ENCODE measurements at regions of chr7 and their contacts with region 1.

Region 1: GRCh38 chr7:158353606-158354570 is 233.7 kb downstream of the PTPRN2 start:
- DNase-seq: peak in 1 of 2 experiments; percentile 13
- H3K4me3 ChIP-seq: no peak overlapping the region
- H3K4me3 Mint-ChIP-seq: no peak overlapping the region
- H3K27ac Mint-ChIP-seq: no peak overlapping the region
- H3K4me1 ChIP-seq: no peaks in the 10 kb centered on the region
- H3K4me1 Mint-ChIP-seq: no peaks in the 10 kb centered on the region
- H3K27me3 ChIP-seq: no peaks in the 10 kb centered on the region
- H3K27me3 Mint-ChIP-seq: no peaks in the 10 kb centered on the region
- CTCF ChIP-seq: peak; percentile 24 to 34

Region 2: DNA sequence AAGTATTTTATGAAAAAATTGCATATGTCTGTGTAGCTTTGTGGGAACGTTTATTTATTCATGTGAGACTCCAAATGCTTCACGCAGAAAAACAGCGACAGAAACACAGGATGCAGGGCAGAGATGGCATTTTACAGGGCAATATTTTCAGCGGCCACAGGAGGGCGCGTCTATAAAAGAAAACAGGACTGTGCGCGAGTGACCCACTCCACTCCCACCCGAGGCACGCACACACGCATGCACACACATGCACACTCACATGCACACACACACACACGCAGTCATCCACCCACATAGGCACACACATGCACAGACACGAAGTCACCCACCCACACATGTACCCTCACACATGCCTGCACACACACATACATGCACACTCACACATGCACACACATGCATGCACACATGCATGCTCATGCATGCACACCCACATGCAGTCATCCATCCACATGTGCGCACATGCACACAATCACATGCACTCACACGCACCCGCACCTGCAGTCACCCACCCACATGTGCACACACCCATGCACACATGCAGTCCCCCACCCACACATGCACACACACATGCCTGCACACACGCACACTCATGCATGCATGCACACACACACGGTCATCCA is 920.8 kb before region 1 on chr7:
- CTCF ChIA-PET with region 1: no interaction called
- POLR2A ChIA-PET with region 1: no interaction called
- intact Hi-C with region 1: loop called (anchors 5 kb)
- DNase-seq: peak; percentile 35 to 44
- H3K4me3 ChIP-seq: no peak overlapping the region
- H3K4me3 Mint-ChIP-seq: peak overlapping the region; percentile 50
- H3K27ac Mint-ChIP-seq: no peak overlapping the region
- H3K4me1 ChIP-seq: no peaks in the 10 kb centered on the region
- H3K4me1 Mint-ChIP-seq: peaks cover 14% of the 10 kb centered on the region
- H3K27me3 ChIP-seq: no peaks in the 10 kb centered on the region
- H3K27me3 Mint-ChIP-seq: no peaks in the 10 kb centered on the region
- CTCF ChIP-seq: peak; percentile 53 to 72

Region 3: DNA sequence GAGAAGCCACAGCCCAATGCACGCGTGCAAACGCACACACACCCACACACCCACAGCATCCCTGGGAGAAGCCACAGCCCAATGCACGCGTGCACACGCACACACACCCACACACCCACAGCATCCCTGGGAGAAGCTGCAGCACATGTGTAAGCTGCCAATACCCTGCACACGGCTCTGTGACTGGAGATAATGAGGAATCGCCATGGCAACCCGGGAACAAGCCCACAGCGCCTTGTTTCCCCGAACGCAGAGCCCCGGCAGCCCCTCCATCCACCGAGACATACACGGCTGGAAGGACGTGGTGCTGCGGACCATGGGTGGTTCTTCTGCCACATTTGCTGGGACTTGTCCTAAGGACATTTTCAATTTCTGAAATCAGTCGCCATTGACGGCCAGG is 12.5 kb after region 1 on chr7:
- CTCF ChIA-PET with region 1: no interaction called
- POLR2A ChIA-PET with region 1: no interaction called
- intact Hi-C with region 1: no loop called
- DNase-seq: no peak
- H3K4me3 ChIP-seq: no peak overlapping the region
- H3K4me3 Mint-ChIP-seq: no peak overlapping the region
- H3K27ac Mint-ChIP-seq: no peak overlapping the region
- H3K4me1 ChIP-seq: no peaks in the 10 kb centered on the region
- H3K4me1 Mint-ChIP-seq: no peaks in the 10 kb centered on the region
- H3K27me3 ChIP-seq: no peaks in the 10 kb centered on the region
- H3K27me3 Mint-ChIP-seq: no peaks in the 10 kb centered on the region
- CTCF ChIP-seq: no peak

Region 4: DNA sequence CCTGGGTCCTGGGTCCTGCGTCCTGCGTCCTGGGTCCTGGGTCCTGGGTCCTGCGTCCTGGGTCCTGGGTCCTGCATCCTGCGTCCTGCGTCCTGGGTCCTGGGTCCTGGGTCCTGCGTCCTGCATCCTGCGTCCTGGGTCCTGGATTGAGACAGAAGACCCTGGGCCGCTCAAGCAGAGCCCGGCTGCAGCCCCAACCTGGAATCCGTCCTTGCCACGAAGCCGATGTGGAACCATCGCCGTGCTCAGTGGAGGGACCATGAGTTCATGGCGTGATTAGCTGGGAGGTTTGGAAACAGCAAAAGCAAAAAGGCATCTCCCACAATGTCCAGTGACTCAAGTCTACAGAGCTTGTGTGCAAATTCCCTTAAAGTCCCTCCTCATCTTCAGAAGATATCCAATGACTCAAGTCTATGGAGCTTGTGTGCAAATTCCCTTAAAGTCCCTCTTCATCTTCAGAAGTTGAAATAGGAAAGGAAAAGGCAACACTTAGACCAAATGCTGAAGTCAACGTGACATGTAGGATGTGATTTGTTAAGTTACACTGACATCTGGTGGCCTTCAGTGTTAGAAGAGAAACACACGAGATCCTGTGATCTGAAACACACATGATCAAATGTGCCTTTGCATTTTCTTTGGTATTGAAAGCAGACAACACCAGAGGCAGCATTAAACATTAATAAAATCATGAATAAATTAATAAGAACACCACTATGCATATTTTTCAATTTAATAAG is 53.9 kb after region 1 on chr7:
- CTCF ChIA-PET with region 1: no interaction called
- POLR2A ChIA-PET with region 1: no interaction called
- intact Hi-C with region 1: loop called (anchors 1 kb)
- DNase-seq: peak in 1 of 2 experiments; percentile 53
- H3K4me3 ChIP-seq: no peak overlapping the region
- H3K4me3 Mint-ChIP-seq: no peak overlapping the region
- H3K27ac Mint-ChIP-seq: peak overlapping the region; percentile 66
- H3K4me1 ChIP-seq: no peaks in the 10 kb centered on the region
- H3K4me1 Mint-ChIP-seq: peaks cover 12% of the 10 kb centered on the region
- H3K27me3 ChIP-seq: no peaks in the 10 kb centered on the region
- H3K27me3 Mint-ChIP-seq: no peaks in the 10 kb centered on the region
- CTCF ChIP-seq: peak; percentile 51 to 63

Region 5: GRCh38 chr7:158428837-158429753 is 75.2 kb after region 1 on chr7:
- CTCF ChIA-PET with region 1: no interaction called
- POLR2A ChIA-PET with region 1: no interaction called
- intact Hi-C with region 1: no loop called
- DNase-seq: peak in 1 of 2 experiments; percentile 24
- H3K4me3 ChIP-seq: no peak overlapping the region
- H3K4me3 Mint-ChIP-seq: no peak overlapping the region
- H3K27ac Mint-ChIP-seq: no peak overlapping the region
- H3K4me1 ChIP-seq: peaks cover 12% of the 10 kb centered on the region; the same call in 1 of the 2 replicates
- H3K4me1 Mint-ChIP-seq: peaks cover 7% of the 10 kb centered on the region
- H3K27me3 ChIP-seq: no peaks in the 10 kb centered on the region
- H3K27me3 Mint-ChIP-seq: no peaks in the 10 kb centered on the region
- CTCF ChIP-seq: no peak

Measured in Caco-2 (cell line).